ENCODE measurements at regions of chr5 and their contacts with region 1.

Region 1: DNA sequence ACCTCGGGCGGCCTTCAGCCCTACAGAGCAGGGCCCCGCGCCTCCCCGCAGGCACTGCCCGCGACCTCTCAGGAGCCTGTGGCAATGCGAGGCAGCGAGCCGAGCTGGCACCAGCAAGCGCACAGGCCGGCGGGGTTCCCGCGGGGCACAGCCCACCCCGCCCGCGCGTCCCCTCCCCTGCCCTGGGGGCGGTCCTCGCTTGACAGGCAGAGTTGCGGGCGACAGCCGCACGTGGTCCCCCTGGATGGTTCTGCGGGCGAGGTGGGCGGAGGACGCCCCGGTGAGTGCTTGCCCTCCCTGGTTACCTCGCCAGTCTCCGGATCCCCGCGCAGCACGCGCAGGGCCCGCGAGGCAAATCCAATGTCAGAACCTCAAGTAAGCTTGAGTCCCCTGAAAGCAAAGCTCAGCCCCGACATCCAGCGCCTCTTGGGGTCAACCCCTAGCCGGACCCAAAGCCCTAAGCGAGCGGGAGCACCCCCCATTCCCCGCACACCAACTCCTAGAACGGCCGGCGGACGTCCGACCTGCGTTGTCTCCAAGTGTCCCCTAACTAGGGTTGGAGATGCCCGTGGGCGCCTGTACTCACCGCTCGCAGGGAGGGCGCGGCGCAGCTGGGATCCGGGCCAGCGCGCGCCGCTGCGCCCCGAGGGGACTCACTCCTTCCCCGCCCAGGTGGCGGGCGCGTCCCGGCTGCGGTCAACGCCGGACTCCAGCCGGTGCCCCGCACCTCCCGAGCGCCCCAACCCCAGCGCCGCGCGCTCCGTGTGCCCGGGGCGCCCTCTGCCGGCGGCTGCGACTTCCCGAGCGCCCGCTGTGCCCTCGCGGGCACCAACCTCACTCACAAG is at the start of gene DRD1:
- DNase-seq: no peak
- H3K4me3 ChIP-seq: no peak within 1 kb of the TSS
- CTCF ChIP-seq: no peak
- POLR2A ChIP-seq: no peak
- total RNA-seq, gene DRD1: 0.06 to 0.23 (median 0.15) TPM in 3 of 4 donors, not detected in the other

Region 2: DNA sequence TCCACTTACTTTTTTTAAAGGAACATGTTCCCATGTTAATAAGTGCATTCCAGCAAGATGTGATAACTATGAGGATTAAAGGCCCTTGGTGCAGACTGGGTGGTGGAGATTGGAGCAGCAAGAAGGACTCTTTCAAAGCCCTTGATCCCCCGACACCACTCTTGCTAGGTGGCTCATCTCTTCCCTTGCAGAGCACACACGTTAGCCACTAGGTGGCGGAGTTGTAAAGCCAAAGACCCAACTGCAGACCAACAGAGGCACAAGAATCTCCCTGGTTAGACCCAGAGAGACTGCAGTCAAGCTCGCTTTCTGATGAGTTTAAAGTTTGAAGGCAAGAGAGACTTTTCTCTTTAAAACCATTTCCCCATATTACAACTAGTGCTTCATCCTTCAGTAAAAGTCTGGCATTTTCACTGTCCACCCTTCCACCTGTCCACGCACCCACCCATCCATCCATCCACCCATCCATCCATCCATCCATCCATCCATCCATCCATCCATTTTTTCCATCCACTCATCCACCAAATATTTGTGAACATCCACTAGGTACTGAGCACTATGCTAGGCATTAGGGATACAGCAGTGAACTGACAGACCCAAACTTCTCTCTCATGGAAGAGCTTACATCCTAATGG is 493.0 kb before region 1 on chr5:
- intact Hi-C with region 1: loop called (anchors 5 kb)
- DNase-seq: peak in 1 of 2 donors; percentile 20
- H3K4me3 ChIP-seq: no peak overlapping the region
- CTCF ChIP-seq: peak in 1 of 3 donors; percentile 58
- POLR2A ChIP-seq: no peak

Region 3: GRCh38 chr5:175214152-175214551 is 230.1 kb before region 1 on chr5:
- intact Hi-C with region 1: loop called (anchors 10 kb)
- DNase-seq: no peak
- H3K4me3 ChIP-seq: no peak overlapping the region
- CTCF ChIP-seq: no peak
- POLR2A ChIP-seq: no peak

Region 4: GRCh38 chr5:175406300-175406699 is 38.0 kb before region 1 on chr5:
- intact Hi-C with region 1: no loop called
- DNase-seq: no peak
- H3K4me3 ChIP-seq: no peak overlapping the region
- CTCF ChIP-seq: no peak
- POLR2A ChIP-seq: no peak

Region 5: GRCh38 chr5:175700991-175701390 is 256.7 kb after region 1 on chr5:
- intact Hi-C with region 1: no loop called
- DNase-seq: peak in 1 of 2 donors; percentile 40
- H3K4me3 ChIP-seq: no peak overlapping the region
- CTCF ChIP-seq: no peak
- POLR2A ChIP-seq: no peak